Heart left ventricle (tissue), 16 donors: ENCODE measurements at regions of chr22 and their contacts with region 1.

Region 1: DNA sequence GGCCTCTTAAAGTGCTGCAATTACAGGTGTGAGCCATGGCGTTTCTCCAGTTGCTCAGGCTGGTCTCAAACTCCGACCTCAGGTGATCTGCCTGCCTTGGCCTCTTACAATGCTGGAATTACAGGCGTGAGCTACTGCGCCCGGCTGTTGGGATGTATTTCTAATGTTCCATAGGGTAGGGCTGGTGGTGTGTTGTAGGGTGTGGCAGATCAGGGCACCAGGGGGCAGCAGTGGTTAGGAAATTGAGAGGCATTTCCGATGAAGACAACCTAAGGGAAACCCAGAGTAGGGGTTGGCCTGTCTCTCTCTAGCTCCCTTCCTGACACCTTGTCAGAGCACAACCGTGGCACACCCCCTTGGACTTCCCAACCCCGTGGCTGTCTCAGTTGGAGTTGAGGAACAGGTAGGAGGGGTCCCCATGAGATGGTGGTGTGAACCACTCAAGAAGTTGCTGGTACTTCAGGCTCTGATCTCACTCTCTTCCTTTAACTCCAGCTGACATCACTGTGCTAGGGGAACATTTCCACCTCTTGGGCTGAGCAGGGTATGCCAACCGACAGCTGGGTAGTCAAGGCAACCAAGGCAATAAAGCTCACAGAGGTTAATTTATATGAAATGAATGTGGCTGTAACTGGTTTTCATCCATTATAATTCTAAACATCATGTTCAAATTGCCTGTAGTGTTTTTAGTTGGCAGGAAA is 33.0 kb downstream of the YWHAH start:
- DNase-seq: peak; percentile 53 to 79 (median 68)
- ATAC-seq: peak; percentile 77 to 90 (median 88)
- H3K4me3 ChIP-seq: no peak overlapping the region
- H3K27ac ChIP-seq: no peak overlapping the region
- H3K4me1 ChIP-seq: no peaks in the 10 kb centered on the region
- H3K27me3 ChIP-seq: no peaks in the 10 kb centered on the region
- CTCF ChIP-seq: peak; percentile 44 to 69 (median 63)
- POLR2A ChIP-seq: no peak

Region 2: GRCh38 chr22:31897842-31898805 is 79.2 kb before region 1 on chr22:
- intact Hi-C with region 1: no loop called
- DNase-seq: no peak
- ATAC-seq: no peak
- H3K4me3 ChIP-seq: no peak overlapping the region
- H3K27ac ChIP-seq: no peak overlapping the region
- H3K4me1 ChIP-seq: no peaks in the 10 kb centered on the region
- H3K27me3 ChIP-seq: no peaks in the 10 kb centered on the region
- CTCF ChIP-seq: no peak
- POLR2A ChIP-seq: no peak

Region 3: DNA sequence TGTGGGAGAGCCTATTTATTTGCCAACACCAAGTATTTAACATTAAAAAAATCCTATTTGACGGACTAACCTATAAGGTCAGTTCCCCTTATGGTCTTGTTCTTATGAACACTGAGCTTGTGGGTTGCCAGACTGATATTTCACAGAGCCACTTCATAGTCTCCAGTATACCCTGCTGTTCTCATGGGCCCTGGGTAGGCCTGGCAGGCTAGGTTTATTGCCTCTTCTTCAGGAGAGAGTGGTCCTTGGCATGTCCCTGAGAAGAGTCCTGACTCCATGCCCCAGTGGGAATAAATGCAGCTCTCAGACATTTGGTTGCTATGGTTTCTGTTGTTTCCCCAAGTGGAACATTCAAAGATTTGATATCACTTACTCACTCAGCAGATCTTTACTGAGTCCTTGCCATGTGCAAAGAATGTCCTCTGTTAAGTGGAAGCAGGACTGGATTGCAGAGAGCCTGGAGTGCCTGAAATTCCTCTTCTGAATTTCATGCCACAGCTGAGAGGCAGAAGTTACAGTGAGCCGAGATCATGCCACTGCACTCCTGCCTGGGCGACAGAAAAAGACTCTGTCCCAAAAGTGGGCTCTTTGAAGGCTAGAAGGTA is 81.5 kb after region 1 on chr22:
- intact Hi-C with region 1: loop called in 1 of 10 experiments (anchors 5 kb)
- DNase-seq: peak in 1 of 5 donors; percentile 16
- ATAC-seq: peak; percentile 80 to 88 (median 85)
- H3K4me3 ChIP-seq: peak overlapping the region; percentile 15 to 63 (median 54)
- H3K27ac ChIP-seq: peak overlapping the region in 11 of 12 donors; percentile 55 to 94 (median 82)
- H3K4me1 ChIP-seq: peaks cover 0 to 25% (median 0%) of the 10 kb centered on the region in 12 donors
- H3K27me3 ChIP-seq: no peaks in the 10 kb centered on the region
- CTCF ChIP-seq: no peak
- POLR2A ChIP-seq: no peak

Region 4: GRCh38 chr22:32080904-32081303 is 103.6 kb after region 1 on chr22:
- intact Hi-C with region 1: loop called (anchors 1 to 5 kb)
- DNase-seq: no peak
- ATAC-seq: peak in 3 of 4 donors; percentile 49 to 59 (median 52)
- H3K4me3 ChIP-seq: no peak overlapping the region
- H3K27ac ChIP-seq: no peak overlapping the region
- H3K4me1 ChIP-seq: peaks cover 0 to 42% (median 13%) of the 10 kb centered on the region in 12 donors
- H3K27me3 ChIP-seq: no peaks in the 10 kb centered on the region
- CTCF ChIP-seq: peak; percentile 21 to 66 (median 55)
- POLR2A ChIP-seq: no peak

Region 5: DNA sequence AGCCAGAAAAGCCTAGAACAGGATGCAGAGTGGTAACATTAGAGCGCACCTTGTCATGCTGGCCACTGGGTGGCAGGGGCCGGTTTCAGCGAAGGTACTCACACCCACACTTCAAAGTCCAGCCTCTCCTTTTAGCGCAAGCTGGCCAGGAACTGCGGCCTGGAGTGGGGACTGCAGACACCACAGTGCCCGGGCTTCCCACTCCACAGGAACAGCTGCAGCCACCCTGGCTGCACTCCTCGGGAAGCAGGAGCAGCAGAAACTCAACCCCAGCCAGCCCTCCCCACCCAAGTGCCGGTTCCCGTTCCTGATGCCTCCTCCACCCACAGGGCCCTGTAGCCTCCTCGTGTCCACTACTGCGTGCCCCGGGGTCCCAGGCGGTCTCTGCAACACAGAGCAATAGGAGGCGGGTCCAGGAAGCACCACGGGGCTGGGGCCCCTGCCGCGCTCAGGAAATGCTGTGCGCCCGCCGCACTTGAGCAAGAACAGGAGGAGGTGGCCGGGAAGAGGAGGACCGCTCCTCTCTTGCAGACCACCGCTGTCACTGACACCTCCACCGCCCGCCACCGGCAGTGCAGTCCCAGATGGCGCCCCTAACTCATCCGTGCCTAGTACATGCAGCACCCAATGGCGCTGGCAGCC is 225.4 kb after region 1 on chr22:
- intact Hi-C with region 1: loop called in 7 of 10 experiments (anchors 5 to 10 kb)
- DNase-seq: peak in 3 of 5 donors; percentile 33 to 57 (median 53)
- ATAC-seq: peak; percentile 63 to 77 (median 73)
- H3K4me3 ChIP-seq: peak overlapping the region in 10 of 12 donors; percentile 0 to 43 (median 27)
- H3K27ac ChIP-seq: no peak overlapping the region
- H3K4me1 ChIP-seq: peaks cover 0 to 22% (median 0%) of the 10 kb centered on the region in 12 donors
- H3K27me3 ChIP-seq: peaks cover 0 to 31% (median 13%) of the 10 kb centered on the region in 9 donors
- CTCF ChIP-seq: peak in 11 of 12 donors; percentile 23 to 56 (median 44)
- POLR2A ChIP-seq: no peak

Region 6: DNA sequence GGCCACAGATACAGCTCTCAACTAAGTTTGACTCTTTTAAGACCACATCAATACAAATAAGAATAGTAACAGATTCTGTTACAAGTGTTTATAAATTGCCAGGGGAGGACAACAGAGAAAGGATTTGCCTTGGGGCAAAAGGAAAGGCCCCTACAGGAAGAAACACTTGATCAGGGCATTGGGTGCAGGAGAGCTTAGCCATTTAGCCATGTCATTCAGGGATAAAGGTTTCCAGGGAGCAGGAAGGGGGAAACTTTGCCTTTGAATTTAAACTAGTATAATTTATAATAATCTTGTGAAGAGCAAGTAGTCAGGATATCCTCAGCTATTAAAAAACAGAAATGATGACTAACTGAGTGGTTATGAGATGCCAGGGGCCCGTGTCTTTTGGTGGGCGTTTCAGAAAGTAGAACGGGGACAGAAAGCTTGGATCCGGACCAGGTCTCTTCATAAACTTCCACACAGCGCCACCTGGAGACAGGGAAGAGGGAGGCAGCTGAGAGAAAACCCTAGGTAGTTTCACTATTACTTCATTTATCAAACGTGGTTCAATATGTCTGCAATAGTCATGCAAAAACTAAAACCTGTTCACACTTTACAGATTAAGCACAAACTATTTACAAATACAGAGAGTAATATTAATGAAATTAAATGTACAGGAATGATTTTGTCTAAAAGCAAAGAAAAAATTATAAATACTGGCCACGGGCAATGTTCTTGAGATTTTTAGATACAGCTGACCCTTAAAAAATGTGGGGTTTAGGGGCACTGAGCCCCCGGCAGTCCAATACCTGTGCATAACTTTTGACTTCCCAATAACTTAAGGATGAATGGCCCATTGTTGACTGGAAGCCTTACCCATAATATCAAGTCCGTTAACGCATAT is 288.8 kb after region 1 on chr22:
- intact Hi-C with region 1: loop called in 6 of 10 experiments (anchors 5 to 10 kb)
- DNase-seq: peak in 4 of 5 donors; percentile 56 to 73 (median 58)
- ATAC-seq: peak in 3 of 4 donors; percentile 59 to 70 (median 61)
- H3K4me3 ChIP-seq: peak overlapping the region in 2 of 12 donors; percentile 12 to 28
- H3K27ac ChIP-seq: no peak overlapping the region
- H3K4me1 ChIP-seq: peaks cover 0 to 8% (median 0%) of the 10 kb centered on the region in 12 donors
- H3K27me3 ChIP-seq: no peaks in the 10 kb centered on the region
- CTCF ChIP-seq: peak; percentile 74 to 90 (median 86)
- POLR2A ChIP-seq: no peak